Activated T-helper 2 cell treated with anti-CD3 and anti-CD28 coated beads, Interferon-gamma antibody, Interleukin-2, Interleukin-4, amounts not matched to agents 10 μg/mL and 5 μg/mL and 100 μg/mL, durations not matched to agents 14 hours and 24 hours and 36 hours (primary cell): ENCODE measurements at regions of chr17 and their contacts with region 1.

Region 1: DNA sequence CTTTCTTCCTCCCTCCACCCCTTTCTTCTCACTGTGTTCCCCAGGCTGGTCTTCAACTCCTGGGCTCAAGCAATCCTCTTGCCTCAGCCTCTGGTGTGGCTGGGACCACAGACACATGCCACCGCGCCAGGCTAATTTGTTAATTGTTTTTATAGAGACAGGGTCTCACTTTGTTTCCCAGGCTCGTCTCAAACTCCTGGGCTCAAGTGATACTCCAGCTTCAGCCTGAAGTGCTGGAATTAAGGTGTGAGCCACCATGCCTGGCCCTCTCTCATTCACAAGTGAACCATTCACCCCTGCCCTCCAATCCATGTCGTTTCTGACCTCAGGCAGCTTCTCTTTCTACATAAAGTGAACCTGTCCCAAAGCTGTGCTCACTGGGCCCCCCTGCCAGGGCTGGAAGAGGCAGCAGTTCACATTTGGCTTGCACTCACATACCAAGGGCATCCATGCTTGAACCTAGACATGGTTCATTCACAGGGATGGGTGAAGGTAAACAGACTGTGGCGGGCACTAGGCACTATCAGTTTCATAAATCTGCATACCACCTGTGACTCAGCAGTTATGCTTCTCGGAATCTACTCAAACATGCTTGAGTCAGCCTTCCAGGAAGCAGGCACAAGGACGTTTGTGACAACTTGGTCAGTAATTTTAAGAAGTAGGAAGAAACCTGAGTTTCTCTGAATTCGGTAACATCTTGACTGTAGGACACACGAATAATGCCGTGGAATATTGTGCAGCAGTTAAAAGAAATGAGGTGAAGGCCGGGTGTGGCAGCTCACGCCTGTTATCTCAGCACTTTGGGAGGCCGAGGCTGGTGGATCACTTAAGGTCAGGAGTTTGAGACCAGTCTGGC is 6.0 kb upstream of the RNF213 start:
- DNase-seq: peak; percentile 67
- H3K4me3 Mint-ChIP-seq: peak overlapping the region; percentile 54
- H3K27ac Mint-ChIP-seq: peak overlapping the region; percentile 91
- H3K4me1 Mint-ChIP-seq: peaks cover 63% of the 10 kb centered on the region
- H3K27me3 Mint-ChIP-seq: no peaks in the 10 kb centered on the region

Region 2: DNA sequence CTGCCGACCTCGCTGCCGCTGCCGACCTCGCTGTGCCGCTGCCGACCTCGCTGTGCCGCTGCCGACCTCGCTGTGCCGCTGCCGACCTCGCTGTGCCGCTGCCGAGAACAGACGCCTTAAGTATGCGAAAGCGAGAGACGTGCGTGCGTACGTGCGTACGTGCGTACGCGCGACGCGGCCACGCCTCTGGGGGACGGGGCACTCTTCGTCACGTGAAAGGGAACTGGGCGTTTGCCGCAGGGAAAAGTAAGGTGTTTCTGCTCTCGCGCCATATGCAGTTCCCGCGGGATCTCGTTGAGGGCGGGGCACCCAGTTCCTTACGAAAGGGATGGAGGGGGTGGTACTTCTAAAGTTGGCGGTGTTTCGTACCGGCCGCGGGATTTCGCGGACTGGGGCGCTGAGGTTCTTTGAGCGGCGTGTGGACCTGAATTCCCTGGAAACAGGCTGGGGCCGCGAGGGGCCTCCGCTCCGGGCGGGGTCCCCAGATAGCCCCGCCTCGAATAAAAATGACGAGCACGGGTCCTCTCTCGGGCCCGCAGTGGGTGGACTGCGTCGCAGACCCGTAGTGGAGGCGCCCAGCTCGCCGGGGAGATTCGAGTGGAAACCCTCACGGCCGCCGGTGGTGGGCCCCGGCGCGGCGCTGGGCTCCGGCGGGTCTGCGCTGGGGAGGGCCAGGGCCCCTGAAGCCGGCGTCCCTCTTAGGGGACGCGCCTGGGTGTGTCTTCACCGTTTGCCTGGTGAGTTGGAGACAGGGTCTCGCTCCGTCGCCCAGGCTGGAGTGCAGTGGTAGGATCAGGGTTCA is 107.4 kb before region 1 on chr17 and contains the start of gene EIF4A3:
- intact Hi-C with region 1: loop called (anchors 2 kb)
- DNase-seq: peak; percentile 98
- H3K4me3 Mint-ChIP-seq: peak within 1 kb of the TSS; percentile 97
- H3K27ac Mint-ChIP-seq: peak within 1 kb of the TSS; percentile 94
- H3K4me1 Mint-ChIP-seq: peaks cover 27% of the 10 kb centered on the region
- H3K27me3 Mint-ChIP-seq: no peaks in the 10 kb centered on the region
- total RNA-seq, gene EIF4A3: 167 and 169 TPM in 2 replicates

Region 3: GRCh38 chr17:80195731-80196529 is 58.7 kb before region 1 on chr17:
- intact Hi-C with region 1: loop called (anchors 1 kb)
- DNase-seq: peak; percentile 20
- H3K4me3 Mint-ChIP-seq: no peak overlapping the region
- H3K27ac Mint-ChIP-seq: no peak overlapping the region
- H3K4me1 Mint-ChIP-seq: no peaks in the 10 kb centered on the region
- H3K27me3 Mint-ChIP-seq: peaks cover 3% of the 10 kb centered on the region

Region 4: DNA sequence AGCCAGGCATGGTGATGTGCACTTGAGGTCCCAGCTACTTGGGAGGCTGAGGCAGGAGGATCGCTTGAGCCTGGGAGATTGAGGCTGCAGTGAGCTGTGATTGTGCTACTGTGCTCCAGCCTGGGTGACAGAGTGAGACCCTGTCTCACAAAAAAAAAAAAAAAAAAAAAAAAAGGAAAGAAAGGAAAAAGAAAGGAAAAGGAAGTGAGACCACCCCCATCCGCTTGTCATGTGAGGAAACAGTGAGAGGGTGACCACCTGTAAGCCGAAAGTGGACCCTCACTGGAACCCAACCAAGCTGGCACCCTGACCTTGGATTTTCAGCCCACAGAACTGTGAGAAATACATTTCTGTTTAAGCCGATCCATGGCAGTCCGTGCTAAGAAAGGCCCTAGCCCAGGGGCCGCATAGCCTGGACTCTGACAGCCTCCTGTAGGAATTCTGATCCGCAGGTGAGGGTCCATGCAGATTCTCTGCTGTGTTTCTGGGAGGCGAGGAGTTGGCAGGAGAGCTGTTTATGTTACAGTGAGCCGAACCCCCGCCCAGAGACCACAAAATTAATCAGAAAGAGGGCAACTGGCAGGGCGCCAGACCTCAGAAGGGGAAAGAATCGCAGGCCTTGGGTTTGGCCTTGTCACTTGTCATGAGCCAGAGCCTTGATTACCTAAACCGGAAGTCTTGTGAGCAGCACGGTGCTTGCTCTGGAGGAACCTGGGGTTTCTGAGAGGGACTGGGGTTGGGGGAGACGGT is 35.4 kb before region 1 on chr17:
- intact Hi-C with region 1: loop called (anchors 2 kb)
- DNase-seq: peak; percentile 84
- H3K4me3 Mint-ChIP-seq: peak overlapping the region; percentile 87
- H3K27ac Mint-ChIP-seq: peak overlapping the region; percentile 83
- H3K4me1 Mint-ChIP-seq: peaks cover 20% of the 10 kb centered on the region
- H3K27me3 Mint-ChIP-seq: no peaks in the 10 kb centered on the region